ENCODE measurements at regions of chr20 and their contacts with region 1.

Region 1: DNA sequence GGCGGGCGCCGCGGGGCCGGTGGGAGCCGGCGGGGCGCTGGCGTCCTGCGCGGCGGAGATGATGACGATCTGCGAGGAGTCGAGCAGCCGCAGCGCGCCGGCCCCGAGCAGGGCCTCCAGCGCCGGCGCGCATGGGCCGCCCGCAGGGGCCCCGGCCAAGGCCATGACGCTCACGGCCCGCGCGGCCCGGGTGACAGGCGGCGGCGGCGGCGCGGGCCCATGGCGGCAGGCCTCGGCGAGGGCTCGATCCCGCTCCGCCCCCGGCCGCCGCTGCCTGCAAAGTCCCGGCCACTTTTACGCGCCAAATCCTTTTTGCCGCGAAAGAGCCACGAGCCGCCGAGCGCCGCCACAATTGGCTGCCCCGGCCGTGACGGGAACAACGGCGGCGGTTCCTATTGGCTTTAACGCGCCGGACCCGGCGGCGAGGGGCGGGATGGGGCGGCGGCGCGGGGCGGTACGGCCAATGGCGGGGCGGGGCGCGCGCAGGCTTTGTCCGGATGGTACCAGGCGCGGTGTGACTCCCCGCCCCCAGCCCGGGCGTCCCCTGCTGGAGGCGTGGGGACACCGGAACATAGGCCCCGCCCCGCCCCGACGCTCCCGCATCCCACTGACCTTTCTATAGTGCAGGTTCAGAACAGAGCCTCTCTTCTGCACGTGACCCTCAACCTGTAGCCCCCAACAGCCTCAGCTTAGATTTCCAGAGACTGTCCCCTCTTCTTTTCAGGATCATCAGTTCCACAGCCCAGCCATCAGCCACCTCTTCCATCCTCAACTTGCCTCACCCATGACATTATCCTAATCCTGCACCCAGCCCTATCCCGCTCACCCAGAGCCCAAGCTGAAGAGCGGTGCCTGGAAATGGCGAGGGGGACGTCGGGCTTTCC is at the start of gene E2F1:
- DNase-seq: peak; percentile 95

Region 2: GRCh38 chr20:33576432-33577125 is 109.8 kb before region 1 on chr20:
- CTCF ChIA-PET with region 1: no interaction called
- POLR2A ChIA-PET with region 1: no interaction called
- DNase-seq: peak; percentile 27

Region 3: DNA sequence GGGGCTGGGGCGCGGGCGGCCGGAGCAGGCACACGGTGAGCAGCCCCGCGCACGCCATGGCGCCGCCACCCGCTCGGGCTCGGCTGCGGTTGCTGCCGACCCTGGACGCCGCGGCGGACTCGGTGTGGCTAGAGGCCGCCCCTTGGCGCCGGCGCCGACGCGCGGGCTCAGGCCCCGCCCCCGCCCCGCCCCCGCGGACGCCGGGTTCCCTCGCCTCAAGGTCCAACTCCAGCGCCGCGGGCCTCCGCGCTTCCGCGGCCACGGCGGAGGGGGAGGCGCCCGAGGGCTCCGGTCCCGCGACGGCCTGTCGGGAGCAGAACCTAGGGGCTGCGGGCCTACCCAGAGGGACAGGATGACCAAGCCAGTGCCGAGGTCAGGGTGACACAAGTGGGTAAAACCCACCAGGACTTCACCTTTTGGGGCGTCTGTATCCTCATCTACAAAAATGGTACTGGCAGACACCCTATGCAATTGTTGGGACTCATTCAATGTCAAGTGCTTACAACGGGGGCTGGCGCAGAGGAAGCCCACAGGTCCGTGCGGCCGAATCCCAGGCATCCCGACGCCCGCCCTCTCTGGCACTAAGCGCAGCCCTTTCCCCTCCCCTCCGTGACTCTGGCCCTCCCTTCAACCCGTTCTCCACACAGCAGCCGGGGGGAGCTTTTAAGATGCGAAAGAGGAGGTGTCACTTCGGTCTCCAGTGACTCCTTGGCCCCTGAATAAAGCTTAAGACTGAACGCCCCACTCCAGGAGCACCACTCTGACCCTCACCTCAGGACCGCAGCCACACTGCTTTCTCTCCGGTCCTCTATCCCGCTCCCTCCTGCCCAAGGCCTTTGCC is 11.8 kb before region 1 on chr20 and contains the start of gene NECAB3:
- CTCF ChIA-PET with region 1: no interaction called
- POLR2A ChIA-PET with region 1: interaction called, 13 read pairs
- DNase-seq: peak; percentile 90

Region 4: DNA sequence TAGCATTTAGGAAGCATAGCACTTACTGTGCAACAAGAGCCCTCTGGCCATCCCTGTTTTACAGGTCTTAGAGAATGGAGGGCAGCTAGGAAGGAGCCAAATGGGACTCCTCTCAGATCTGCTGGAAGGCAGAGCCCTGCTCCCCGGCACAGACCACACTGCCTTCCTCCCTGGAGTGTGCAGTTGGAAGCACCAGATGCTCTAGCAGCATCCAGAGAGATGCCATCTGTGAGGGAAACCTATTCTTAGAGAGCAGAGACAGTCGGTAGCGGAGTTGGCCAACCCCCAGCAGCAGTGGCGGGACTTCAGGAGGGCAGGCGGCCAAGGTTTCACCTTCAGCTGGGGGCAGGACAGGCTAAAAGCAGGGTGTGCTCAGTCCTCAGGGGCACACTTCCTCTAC is 16.5 kb after region 1 on chr20:
- CTCF ChIA-PET with region 1: no interaction called
- POLR2A ChIA-PET with region 1: no interaction called
- DNase-seq: no peak